PC-9 (cell line): ENCODE measurements at regions of chr16 and their contacts with region 1.

Region 1: DNA sequence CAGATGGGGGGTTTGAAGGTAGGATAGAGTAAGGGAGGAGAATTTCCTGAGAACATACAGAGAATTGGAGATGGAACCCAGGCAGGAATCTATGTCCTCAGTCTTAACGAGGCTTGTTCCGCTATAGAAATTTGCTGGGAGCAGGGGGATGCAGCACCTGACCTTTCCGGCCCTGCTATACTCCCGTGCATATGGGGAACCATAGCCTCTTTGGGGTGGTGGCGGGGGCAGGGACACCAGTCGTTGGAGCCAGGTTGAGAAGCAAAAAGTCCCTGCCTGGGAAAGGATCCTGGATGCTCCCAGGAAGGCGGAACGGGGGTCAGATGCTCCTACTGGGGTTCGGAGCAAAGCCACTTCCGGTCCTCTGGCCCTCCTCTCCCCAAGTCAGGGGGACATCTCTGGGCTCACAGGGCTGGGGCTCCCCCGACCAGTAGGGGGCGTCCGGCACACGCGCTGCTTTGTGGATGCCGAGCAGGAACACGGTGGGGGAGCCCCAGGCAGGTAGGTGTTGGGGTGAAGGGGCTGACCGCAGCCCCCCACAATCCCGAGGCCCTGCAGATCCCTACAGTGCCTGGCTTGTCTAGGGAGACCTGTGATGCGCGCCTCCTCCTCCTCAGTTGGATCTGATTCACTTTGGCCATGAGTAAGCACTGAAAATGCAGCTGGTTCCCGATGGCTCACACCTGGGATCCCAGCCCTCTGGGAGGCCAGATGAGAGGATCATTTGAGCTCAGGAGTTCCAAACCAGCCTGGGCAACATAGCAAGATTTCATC is 15.5 kb upstream of the TFAP4 start:
- DNase-seq: peak; percentile 53 to 78
- H3K4me3 ChIP-seq: no peak overlapping the region
- H3K27ac ChIP-seq: no peak overlapping the region
- H3K4me1 ChIP-seq: peaks cover 57% of the 10 kb centered on the region
- H3K27me3 ChIP-seq: no peaks in the 10 kb centered on the region
- CTCF ChIP-seq: peak; percentile 90

Region 2: GRCh38 chr16:4271176-4272066 is 16.9 kb before region 1 on chr16:
- CTCF ChIA-PET with region 1: interaction called, 10 read pairs
- POLR2A ChIA-PET with region 1: interaction called, 8 read pairs
- intact Hi-C with region 1: loop called (anchors 2 kb)
- DNase-seq: peak; percentile 82 to 94
- H3K4me3 ChIP-seq: peak overlapping the region; percentile 81
- H3K27ac ChIP-seq: peak overlapping the region; percentile 92
- H3K4me1 ChIP-seq: peaks cover 7% of the 10 kb centered on the region
- H3K27me3 ChIP-seq: no peaks in the 10 kb centered on the region
- CTCF ChIP-seq: no peak

Region 3: GRCh38 chr16:4307215-4308037 is 19.1 kb after region 1 on chr16:
- CTCF ChIA-PET with region 1: interaction called, 18 read pairs
- POLR2A ChIA-PET with region 1: interaction called, 24 read pairs
- intact Hi-C with region 1: no loop called
- DNase-seq: peak; percentile 86 to 99
- H3K4me3 ChIP-seq: peak overlapping the region; percentile 87
- H3K27ac ChIP-seq: peak overlapping the region; percentile 26; the same call in 1 of the 2 replicates
- H3K4me1 ChIP-seq: peaks cover 26% of the 10 kb centered on the region
- H3K27me3 ChIP-seq: no peaks in the 10 kb centered on the region
- CTCF ChIP-seq: no peak

Region 4: DNA sequence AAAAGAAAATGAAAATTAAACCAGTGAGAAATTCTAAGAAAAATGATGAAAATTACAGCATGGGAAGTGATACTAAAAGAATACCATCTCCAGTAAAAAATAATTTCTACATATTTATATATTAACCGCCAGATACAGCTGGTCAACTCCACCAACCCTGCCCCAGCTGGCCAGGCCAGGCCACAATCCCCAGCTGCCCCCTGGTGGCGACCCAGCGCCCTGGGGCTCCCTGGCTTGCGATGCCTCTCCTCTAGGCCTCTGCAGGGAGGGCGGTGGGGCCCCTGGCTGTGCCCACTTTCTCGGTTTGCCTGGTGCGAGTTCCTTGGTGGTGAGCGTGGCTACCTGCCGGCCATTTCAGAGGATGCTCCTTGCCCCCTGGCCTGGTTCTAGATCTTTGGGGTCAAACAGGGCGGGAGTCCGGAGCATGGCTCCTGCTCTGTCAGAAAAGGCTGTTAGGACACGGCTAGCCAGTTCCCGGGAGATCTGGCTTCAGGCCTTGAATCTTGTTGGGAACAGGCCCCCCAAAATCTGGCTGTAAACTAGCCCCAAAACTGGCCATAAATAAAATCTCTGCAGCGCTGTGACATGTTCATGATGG is 42.0 kb after region 1 on chr16:
- CTCF ChIA-PET with region 1: interaction called, 10 read pairs
- POLR2A ChIA-PET with region 1: no interaction called
- intact Hi-C with region 1: loop called (anchors 1 kb)
- DNase-seq: peak in 1 of 2 experiments; percentile 85
- H3K4me3 ChIP-seq: no peak overlapping the region
- H3K27ac ChIP-seq: no peak overlapping the region
- H3K4me1 ChIP-seq: no peaks in the 10 kb centered on the region
- H3K27me3 ChIP-seq: no peaks in the 10 kb centered on the region
- CTCF ChIP-seq: peak; percentile 96

Region 5: DNA sequence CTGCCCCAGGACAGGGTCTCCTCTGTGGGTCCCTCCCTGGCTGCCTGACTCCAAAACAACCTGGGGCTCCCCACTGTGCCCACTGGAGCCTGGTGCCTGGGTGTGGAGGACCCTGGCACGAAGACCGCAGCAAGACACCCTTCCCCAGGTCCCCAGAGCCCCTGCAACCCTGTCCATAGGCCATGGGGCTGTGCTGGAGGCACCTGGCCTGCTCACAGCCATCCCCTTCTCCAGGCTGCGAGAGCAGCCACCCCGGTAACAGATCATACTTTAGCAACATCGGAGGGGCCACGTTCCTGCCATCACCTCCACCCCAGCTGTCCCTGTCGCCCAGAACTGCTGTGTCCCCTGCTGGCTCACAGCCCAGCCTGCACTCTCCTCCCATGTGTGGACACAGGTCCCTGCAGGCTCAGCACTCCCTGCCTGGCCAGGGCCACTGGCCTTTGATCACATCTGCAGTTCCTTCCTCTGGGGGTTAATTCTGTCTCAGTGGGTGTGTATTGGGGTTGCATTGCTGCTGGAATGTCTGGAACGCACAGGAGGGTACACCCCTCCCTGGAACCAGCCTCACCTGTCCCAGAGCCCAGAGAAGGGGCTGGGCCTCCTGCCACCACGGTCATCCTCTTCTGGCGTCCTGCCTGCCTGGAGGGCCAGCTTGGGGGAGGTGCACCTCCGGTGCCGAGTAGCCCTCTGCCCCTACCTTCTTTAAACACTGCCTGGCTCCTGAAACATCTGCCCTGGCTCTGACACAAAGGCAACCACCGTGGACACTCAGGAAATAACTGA is 636.5 kb after region 1 on chr16:
- CTCF ChIA-PET with region 1: no interaction called
- POLR2A ChIA-PET with region 1: interaction called, 15 read pairs
- intact Hi-C with region 1: no loop called
- DNase-seq: peak; percentile 96 to 99
- H3K4me3 ChIP-seq: peak overlapping the region; percentile 15; the same call in 1 of the 2 replicates
- H3K27ac ChIP-seq: peak overlapping the region; percentile 65
- H3K4me1 ChIP-seq: peaks cover 45% of the 10 kb centered on the region
- H3K27me3 ChIP-seq: no peaks in the 10 kb centered on the region
- CTCF ChIP-seq: no peak